ENCODE measurements at regions of chr1 and their contacts with region 1.

Region 1: GRCh38 chr1:67307251-67308060 is at the start of gene IL12RB2:
- DNase-seq: peak in 6 of 9 experiments; percentile 18 to 65 (median 49)
- ATAC-seq: peak; percentile 73
- H3K4me3 ChIP-seq: peak within 1 kb of the TSS; percentile 32 to 43
- H3K4me3 Mint-ChIP-seq: peak within 1 kb of the TSS; percentile 86
- H3K27ac ChIP-seq: no peak within 1 kb of the TSS
- H3K27ac Mint-ChIP-seq: peak within 1 kb of the TSS; percentile 77
- H3K4me1 ChIP-seq: no peaks in the 10 kb centered on the region
- H3K4me1 Mint-ChIP-seq: peaks cover 11% of the 10 kb centered on the region
- H3K27me3 ChIP-seq: peaks cover 10 to 11% of the 10 kb centered on the region in 2 experiments
- H3K27me3 Mint-ChIP-seq: peaks cover 17% of the 10 kb centered on the region
- CTCF ChIP-seq: no peak
- total RNA-seq, gene IL12RB2: 1.5 to 2.2 TPM

Region 2: DNA sequence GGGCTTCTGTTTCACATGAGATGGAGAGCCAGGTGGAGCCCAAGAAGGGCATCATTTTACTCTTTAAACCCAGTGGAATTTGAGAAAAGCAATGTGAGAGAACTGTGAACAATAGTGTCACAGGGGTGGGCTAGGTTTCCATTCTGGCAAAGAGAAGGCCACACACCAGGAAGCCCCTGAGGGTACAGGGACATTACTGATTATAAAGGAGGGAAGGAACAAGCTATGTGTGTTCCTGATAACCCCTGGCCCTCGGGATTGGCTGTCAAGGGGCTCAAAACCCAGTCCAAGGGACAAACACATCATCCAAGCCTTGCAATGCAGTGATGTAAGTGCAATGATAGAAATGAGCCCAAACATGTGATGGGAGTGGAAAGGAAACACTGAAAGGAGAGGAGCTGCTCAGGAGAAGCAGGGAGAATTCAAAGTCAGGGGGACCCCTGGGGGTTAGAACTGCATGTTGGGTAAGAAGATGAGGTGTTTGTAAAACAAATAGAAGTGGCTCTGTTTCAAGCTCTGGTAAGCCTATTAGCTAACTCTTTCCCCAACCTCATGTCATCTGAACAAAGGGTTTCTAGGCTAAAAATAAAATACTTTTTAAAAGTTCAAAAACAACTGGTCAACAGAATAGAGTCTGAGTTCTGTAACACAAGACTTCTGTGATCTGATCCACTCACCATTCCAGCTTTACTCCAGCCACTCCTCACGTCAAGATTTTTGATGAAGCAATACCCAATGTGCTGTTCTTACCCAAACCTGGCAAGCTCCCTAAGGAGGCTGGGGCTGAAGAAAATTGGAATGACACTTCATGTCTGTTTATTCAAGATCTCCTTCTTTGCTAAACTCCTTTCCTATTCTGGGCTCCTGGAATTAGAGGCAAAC is 50.9 kb before region 1 on chr1:
- CTCF ChIA-PET with region 1: no interaction called
- POLR2A ChIA-PET with region 1: no interaction called
- intact Hi-C with region 1: no loop called
- DNase-seq: no peak
- ATAC-seq: no peak
- H3K4me3 ChIP-seq: no peak overlapping the region
- H3K4me3 Mint-ChIP-seq: no peak overlapping the region
- H3K27ac ChIP-seq: no peak overlapping the region
- H3K27ac Mint-ChIP-seq: no peak overlapping the region
- H3K4me1 ChIP-seq: no peaks in the 10 kb centered on the region
- H3K4me1 Mint-ChIP-seq: peaks cover 2% of the 10 kb centered on the region
- H3K27me3 ChIP-seq: no peaks in the 10 kb centered on the region
- H3K27me3 Mint-ChIP-seq: no peaks in the 10 kb centered on the region
- CTCF ChIP-seq: no peak

Region 3: DNA sequence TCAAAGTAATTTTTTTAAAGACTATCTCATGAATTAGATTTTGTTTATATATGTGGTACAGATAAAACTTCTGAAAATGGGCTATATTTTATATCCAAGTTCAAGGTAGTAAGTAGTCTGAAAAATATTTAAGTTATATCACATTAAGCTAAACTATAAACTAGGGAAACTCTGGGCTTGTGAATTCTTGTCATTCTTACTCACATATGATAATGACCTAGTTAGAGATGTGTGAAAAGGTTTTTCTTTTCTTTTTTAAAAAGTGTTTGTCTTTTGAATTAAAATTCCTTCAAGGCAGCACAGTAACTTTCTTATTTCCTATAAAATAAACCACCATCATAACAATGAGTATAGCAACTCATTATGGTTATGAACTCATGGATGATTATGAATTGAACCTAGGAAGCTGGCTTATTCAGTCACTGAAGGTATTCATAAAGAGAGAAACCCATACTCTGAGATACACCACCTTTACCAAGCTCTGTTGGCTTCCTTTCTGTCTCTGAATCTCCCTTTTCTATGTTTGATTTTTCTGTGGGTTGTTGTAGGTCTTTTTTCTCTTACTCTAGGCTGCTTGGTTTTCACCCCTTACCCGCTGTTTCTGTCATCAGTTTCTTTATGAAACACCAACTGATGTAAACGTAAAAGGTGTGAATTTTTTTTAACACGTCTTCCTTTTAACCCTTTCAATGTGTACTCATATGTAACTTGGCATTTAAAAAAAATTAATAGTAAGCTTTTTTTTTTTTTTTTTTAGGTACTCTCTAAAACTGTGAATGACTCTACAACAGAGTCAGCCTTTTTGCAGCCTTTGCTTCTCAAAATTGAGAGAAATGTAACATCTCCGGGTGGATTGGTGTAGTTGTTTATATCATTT is 25.4 kb after region 1 on chr1:
- CTCF ChIA-PET with region 1: no interaction called
- POLR2A ChIA-PET with region 1: interaction called, 10 read pairs
- intact Hi-C with region 1: no loop called
- DNase-seq: peak in 2 of 9 experiments; percentile 79 to 88
- ATAC-seq: peak; percentile 78
- H3K4me3 ChIP-seq: no peak overlapping the region
- H3K4me3 Mint-ChIP-seq: peak overlapping the region; percentile 26
- H3K27ac ChIP-seq: peak overlapping the region in 1 of 2 experiments; percentile 51
- H3K27ac Mint-ChIP-seq: peak overlapping the region; percentile 27
- H3K4me1 ChIP-seq: peaks cover 25% of the 10 kb centered on the region
- H3K4me1 Mint-ChIP-seq: peaks cover 41% of the 10 kb centered on the region
- H3K27me3 ChIP-seq: no peaks in the 10 kb centered on the region
- H3K27me3 Mint-ChIP-seq: no peaks in the 10 kb centered on the region
- CTCF ChIP-seq: no peak

Measured in CD8-positive, alpha-beta T cell (primary cell).